Gastrocnemius medialis (tissue), 4 donors: ENCODE measurements at regions of chr4 and their contacts with region 1.

Region 1: GRCh38 chr4:76504613-76505465 is 69.8 kb downstream of the SHROOM3 start:
- DNase-seq: no peak
- ATAC-seq: peak; percentile 46 to 50
- H3K4me3 ChIP-seq: no peak overlapping the region
- H3K27ac ChIP-seq: no peak overlapping the region
- H3K4me1 ChIP-seq: no peaks in the 10 kb centered on the region
- H3K27me3 ChIP-seq: no peaks in the 10 kb centered on the region
- CTCF ChIP-seq: peak; percentile 47 to 66 (median 56)
- POLR2A ChIP-seq: no peak

Region 2: DNA sequence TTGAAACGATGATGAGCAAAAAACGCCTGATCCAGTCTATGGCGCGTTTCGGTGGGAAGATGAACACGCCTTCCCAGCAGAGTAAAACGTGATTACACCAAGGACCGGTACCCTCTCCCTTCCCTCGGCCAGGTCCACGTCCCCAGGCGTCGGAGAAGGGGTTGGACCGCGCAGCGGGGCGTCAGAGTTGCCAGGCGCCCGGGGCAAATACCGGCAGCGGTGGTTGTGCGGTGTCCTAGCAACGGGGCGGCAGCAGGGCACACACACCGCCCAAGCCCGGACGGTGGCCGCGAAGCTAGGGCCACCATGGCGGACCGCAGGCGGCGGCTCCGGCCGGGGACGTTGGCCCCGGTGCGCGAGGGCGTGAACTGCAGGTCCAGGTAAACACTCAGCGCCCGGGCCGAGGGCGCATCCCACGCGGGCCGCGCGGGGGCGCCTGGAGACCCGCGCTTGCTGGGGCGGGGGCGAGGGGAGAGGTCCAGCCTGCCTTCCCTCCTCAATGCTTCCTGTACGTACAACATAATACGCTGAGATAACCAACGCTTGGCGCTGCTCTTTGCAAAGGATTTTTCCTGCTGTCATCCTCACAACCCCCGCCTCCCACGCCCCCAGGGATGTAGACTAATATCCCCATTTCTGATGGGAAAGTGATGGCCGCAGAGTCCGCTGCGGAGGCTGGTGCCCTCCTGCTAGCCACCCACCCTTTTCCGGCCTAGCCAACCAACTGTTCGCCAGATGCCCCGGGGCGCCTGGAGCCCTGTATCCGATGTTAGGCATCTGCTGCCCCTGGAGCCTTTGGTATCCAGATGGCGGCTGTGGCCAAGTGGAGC is 253.2 kb before region 1 on chr4 and contains the start of gene FAM47E:
- in situ Hi-C with region 1: loop called in 1 of 4 experiments (anchors 25 kb)
- intact Hi-C with region 1: loop called (anchors 10 kb)
- DNase-seq: peak; percentile 73 to 85
- ATAC-seq: peak; percentile 89 to 92
- H3K4me3 ChIP-seq: peak within 1 kb of the TSS; percentile 63 to 84 (median 65)
- H3K27ac ChIP-seq: peak within 1 kb of the TSS; percentile 73 to 90 (median 78)
- H3K4me1 ChIP-seq: peaks cover 3 to 8% of the 10 kb centered on the region in 2 donors
- H3K27me3 ChIP-seq: no peaks in the 10 kb centered on the region
- CTCF ChIP-seq: peak; percentile 38 to 63 (median 53)
- POLR2A ChIP-seq: peak; percentile 14 to 52
- total RNA-seq, gene FAM47E: 0.56 to 6.8 (median 3.8) TPM

Region 3: GRCh38 chr4:76420762-76421581 is 83.9 kb before region 1 on chr4 and contains the start of gene CCDC158:
- in situ Hi-C with region 1: loop called in 1 of 4 experiments (anchors 10 kb)
- intact Hi-C with region 1: no loop called
- DNase-seq: no peak
- ATAC-seq: peak; percentile 36 to 58
- H3K4me3 ChIP-seq: peak within 1 kb of the TSS; percentile 50 to 67 (median 58)
- H3K27ac ChIP-seq: no peak within 1 kb of the TSS
- H3K4me1 ChIP-seq: no peaks in the 10 kb centered on the region
- H3K27me3 ChIP-seq: no peaks in the 10 kb centered on the region
- CTCF ChIP-seq: no peak
- POLR2A ChIP-seq: no peak
- total RNA-seq, gene CCDC158: not detected

Region 4: DNA sequence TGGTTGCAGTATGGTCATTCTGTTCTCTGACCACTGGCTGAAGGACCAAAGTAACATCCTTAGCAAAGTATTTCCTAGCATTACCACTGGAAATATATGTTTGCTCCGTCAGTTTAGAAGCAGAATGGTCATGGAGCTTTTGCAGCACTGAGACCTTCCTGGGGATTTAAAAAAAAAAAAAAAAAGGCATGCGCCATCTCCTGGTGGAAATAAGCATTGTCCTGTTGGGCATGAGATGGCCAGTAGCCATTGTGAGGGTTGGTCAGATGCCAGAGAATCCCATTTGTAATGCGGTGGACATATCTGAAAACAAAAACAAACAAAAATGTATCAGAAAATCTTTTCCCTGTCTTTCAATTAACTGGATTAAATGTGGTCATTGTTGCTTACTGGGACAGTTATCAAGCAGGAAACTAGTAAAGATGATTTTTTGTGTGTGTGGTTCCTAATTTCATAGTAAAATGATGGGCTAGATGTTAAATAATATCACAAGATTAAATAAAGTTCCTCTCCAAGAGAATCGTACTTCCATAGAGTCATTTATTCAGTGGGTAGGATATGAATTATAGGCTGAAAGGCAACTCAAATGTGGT is 253.5 kb after region 1 on chr4:
- in situ Hi-C with region 1: loop called (anchors 10 kb)
- intact Hi-C with region 1: no loop called
- DNase-seq: no peak
- ATAC-seq: peak in 1 of 2 donors; percentile 75
- H3K4me3 ChIP-seq: no peak overlapping the region
- H3K27ac ChIP-seq: no peak overlapping the region
- H3K4me1 ChIP-seq: no peaks in the 10 kb centered on the region
- H3K27me3 ChIP-seq: no peaks in the 10 kb centered on the region
- CTCF ChIP-seq: peak; percentile 49 to 73 (median 57)
- POLR2A ChIP-seq: no peak

Region 5: GRCh38 chr4:77203380-77204197 is 698.8 kb after region 1 on chr4:
- in situ Hi-C with region 1: loop called (anchors 10 to 25 kb)
- intact Hi-C with region 1: no loop called
- DNase-seq: peak; percentile 38 to 44
- ATAC-seq: peak; percentile 84 to 88
- H3K4me3 ChIP-seq: no peak overlapping the region
- H3K27ac ChIP-seq: no peak overlapping the region
- H3K4me1 ChIP-seq: no peaks in the 10 kb centered on the region
- H3K27me3 ChIP-seq: no peaks in the 10 kb centered on the region
- CTCF ChIP-seq: peak; percentile 68 to 77 (median 72)
- POLR2A ChIP-seq: no peak